Activated CD8-positive, alpha-beta memory T cell treated with anti-CD3 and anti-CD28 coated beads, Interleukin-2, amount 10 ng/mL, durations not matched to agents 7 days and 5 days (primary cell): ENCODE measurements at regions of chr11 and their contacts with region 1.

Region 1: GRCh38 chr11:4636962-4637661 is at the start of gene OR51D1:
- DNase-seq: peak; percentile 76
- ATAC-seq: peak; percentile 96
- H3K4me3 Mint-ChIP-seq: no peak within 1 kb of the TSS
- H3K27ac Mint-ChIP-seq: no peak within 1 kb of the TSS
- H3K4me1 Mint-ChIP-seq: no peaks in the 10 kb centered on the region
- H3K27me3 Mint-ChIP-seq: peaks cover 8% of the 10 kb centered on the region
- total RNA-seq, gene OR51D1: not detected

Region 2: DNA sequence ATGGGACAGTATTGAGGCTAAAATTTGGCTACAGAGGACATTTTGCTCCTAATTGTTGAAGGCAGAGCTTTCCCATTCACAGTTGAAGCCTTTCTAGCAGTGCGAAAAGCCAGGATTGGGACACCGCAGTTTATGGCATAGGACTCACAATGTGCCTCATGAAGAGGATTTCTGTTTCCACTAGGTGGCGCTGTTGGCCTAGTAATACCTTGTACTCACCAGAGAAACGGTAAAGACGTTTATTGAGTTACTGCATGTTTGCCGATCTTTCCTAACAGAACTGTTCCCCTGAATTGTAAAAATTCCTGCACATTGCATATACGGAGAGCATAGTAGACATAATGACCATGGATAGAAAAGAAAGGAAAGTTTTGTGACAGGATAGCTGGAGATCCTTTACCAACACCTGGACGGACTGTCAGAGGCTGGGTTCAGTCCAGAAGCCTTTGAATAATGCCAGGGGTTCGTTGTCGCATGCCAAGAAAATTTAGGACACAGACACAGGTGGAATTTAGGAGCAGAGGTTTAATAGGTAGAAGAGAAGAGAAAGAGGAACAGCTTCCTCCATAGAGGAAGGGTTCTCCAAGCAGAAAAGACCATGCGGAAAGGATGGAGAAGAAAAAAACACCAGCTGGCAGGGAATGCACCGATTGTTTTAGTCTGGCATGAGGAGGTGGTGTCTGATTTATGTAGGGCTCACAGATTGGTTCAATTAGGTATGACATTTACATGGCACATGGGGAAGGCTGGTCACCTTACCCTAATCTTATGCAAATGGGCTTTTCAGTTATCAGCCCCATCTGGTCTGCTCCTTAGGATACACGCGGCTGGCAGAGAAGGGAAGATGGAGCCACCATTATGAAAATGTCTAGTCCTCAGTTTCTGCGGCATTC is 10.7 kb before region 1 on chr11:
- CTCF ChIA-PET with region 1: interaction called, 17 read pairs
- DNase-seq: peak; percentile 77
- ATAC-seq: peak; percentile 63
- H3K4me3 Mint-ChIP-seq: no peak overlapping the region
- H3K27ac Mint-ChIP-seq: no peak overlapping the region
- H3K4me1 Mint-ChIP-seq: no peaks in the 10 kb centered on the region
- H3K27me3 Mint-ChIP-seq: peaks cover 36% of the 10 kb centered on the region

Region 3: DNA sequence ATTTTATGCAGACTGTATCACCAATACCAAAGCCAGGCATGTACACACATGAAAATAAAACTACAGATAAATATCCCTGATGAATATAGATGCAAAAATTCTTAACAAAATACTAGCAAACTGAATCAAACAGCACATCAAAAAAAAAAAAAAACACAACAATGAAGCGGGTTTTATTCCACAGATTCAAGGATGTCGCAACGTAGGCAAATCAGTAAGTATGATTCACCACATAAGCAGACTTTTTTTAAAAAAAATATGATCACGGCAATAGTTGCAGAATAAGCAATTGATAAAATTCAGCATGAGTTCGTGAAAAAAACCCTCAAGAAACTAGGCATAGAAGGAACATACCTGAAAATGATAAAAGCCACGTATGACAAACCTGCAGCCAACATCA is 111.3 kb after region 1 on chr11:
- CTCF ChIA-PET with region 1: no interaction called
- DNase-seq: no peak
- ATAC-seq: no peak
- H3K4me3 Mint-ChIP-seq: no peak overlapping the region
- H3K27ac Mint-ChIP-seq: no peak overlapping the region
- H3K4me1 Mint-ChIP-seq: no peaks in the 10 kb centered on the region
- H3K27me3 Mint-ChIP-seq: peaks cover 4% of the 10 kb centered on the region

Region 4: GRCh38 chr11:5004424-5005274 is 367.5 kb after region 1 on chr11:
- CTCF ChIA-PET with region 1: interaction called, 11 read pairs
- DNase-seq: peak; percentile 51
- ATAC-seq: peak; percentile 23
- H3K4me3 Mint-ChIP-seq: no peak overlapping the region
- H3K27ac Mint-ChIP-seq: no peak overlapping the region
- H3K4me1 Mint-ChIP-seq: no peaks in the 10 kb centered on the region
- H3K27me3 Mint-ChIP-seq: no peaks in the 10 kb centered on the region